Tibial artery (tissue), 4 donors: ENCODE measurements at regions of chr7 and their contacts with region 1.

Region 1: DNA sequence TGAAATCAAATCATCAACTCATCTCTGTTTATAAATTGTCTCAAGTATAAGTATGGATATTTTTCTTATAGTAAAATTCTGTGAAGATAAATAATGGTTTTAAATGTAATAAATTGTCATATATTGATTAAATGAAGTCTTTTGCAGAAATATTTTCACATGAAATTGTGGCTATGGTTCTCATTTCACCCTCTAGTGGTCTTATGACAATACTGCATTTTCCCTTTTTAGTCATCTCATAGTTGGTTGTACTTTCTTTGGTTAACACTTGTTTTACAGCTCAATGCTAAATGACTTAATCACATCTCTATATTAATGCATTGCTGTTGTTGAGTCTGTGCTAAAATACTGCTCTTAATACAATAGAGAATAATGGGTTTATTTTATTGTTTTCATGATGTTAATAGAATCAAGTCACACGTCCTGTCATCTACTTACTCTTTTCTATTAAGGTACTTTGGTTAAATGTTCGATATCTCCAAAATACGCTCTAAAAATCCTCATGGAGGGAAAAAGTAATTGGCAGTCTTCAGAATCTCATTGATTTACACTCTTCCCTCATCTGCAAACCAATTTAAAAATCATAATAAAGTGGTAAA is 38.0 kb upstream of the CACNA2D1 start:
- DNase-seq: no peak
- H3K4me3 ChIP-seq: no peak overlapping the region
- H3K27ac ChIP-seq: no peak overlapping the region
- H3K4me1 ChIP-seq: no peaks in the 10 kb centered on the region
- H3K27me3 ChIP-seq: no peaks in the 10 kb centered on the region
- CTCF ChIP-seq: peak; percentile 66 to 80

Region 2: DNA sequence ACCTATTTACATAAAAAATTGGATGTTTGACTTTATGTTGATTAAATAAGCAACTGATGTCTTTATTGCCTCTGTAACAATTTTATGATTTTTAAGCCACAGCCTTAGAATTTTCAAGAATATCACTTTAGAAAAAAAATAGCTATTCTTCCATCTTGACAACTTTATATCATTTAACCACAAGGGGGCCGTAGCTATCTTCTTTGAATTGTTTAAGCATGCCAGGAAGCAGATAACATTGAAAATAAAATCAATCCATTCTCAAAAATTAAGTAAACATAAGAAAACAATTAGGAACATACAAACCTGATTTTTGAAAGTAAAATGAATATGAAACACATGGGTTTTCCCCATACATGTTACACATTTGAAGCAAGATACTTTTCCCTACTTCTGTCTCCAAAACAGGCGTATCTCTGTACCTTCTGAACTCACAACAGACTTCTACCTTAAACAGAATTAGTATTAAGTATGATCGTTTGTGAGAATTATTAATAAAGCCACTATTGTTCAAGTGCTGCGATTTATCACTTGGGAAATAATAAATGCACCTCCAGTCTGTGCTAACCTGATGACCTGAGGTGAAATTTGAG is 247.0 kb before region 1 on chr7:
- intact Hi-C with region 1: loop called (anchors 10 kb)
- DNase-seq: no peak
- H3K4me3 ChIP-seq: no peak overlapping the region
- H3K27ac ChIP-seq: no peak overlapping the region
- H3K4me1 ChIP-seq: no peaks in the 10 kb centered on the region
- H3K27me3 ChIP-seq: no peaks in the 10 kb centered on the region
- CTCF ChIP-seq: peak; percentile 51 to 57

Region 3: GRCh38 chr7:82244947-82245517 is 236.6 kb before region 1 on chr7:
- intact Hi-C with region 1: no loop called
- DNase-seq: no peak
- H3K4me3 ChIP-seq: no peak overlapping the region
- H3K27ac ChIP-seq: no peak overlapping the region
- H3K4me1 ChIP-seq: peaks cover 0 to 19% (median 2%) of the 10 kb centered on the region in 4 donors
- H3K27me3 ChIP-seq: no peaks in the 10 kb centered on the region
- CTCF ChIP-seq: no peak